Ovary (tissue), 10 donors: ENCODE measurements at regions of chr14 and their contacts with region 1.

Region 1: GRCh38 chr14:61568572-61569131 is 126.7 kb upstream of the HIF1A start:
- DNase-seq: peak in 2 of 5 donors; percentile 40 to 57
- H3K4me3 ChIP-seq: no peak overlapping the region
- H3K27ac ChIP-seq: no peak overlapping the region
- H3K4me1 ChIP-seq: peaks cover 8% of the 10 kb centered on the region
- H3K27me3 ChIP-seq: no peaks in the 10 kb centered on the region
- CTCF ChIP-seq: no peak
- EP300 ChIP-seq: no peak
- POLR2A ChIP-seq: no peak

Region 2: GRCh38 chr14:61489932-61490331 is 78.7 kb before region 1 on chr14:
- intact Hi-C with region 1: loop called in 1 of 4 experiments (anchors 10 kb)
- DNase-seq: no peak
- H3K4me3 ChIP-seq: no peak overlapping the region
- H3K27ac ChIP-seq: no peak overlapping the region
- H3K4me1 ChIP-seq: no peaks in the 10 kb centered on the region
- H3K27me3 ChIP-seq: no peaks in the 10 kb centered on the region
- CTCF ChIP-seq: no peak
- EP300 ChIP-seq: no peak
- POLR2A ChIP-seq: no peak

Region 3: GRCh38 chr14:62420847-62421246 is 852.2 kb after region 1 on chr14:
- intact Hi-C with region 1: loop called in 1 of 4 experiments (anchors 5 kb)
- DNase-seq: no peak
- H3K4me3 ChIP-seq: no peak overlapping the region
- H3K27ac ChIP-seq: no peak overlapping the region
- H3K4me1 ChIP-seq: no peaks in the 10 kb centered on the region
- H3K27me3 ChIP-seq: no peaks in the 10 kb centered on the region
- CTCF ChIP-seq: no peak
- EP300 ChIP-seq: no peak
- POLR2A ChIP-seq: no peak